HepG2 (cell line): ENCODE measurements at regions of chr19 and their contacts with region 1.

Region 1: DNA sequence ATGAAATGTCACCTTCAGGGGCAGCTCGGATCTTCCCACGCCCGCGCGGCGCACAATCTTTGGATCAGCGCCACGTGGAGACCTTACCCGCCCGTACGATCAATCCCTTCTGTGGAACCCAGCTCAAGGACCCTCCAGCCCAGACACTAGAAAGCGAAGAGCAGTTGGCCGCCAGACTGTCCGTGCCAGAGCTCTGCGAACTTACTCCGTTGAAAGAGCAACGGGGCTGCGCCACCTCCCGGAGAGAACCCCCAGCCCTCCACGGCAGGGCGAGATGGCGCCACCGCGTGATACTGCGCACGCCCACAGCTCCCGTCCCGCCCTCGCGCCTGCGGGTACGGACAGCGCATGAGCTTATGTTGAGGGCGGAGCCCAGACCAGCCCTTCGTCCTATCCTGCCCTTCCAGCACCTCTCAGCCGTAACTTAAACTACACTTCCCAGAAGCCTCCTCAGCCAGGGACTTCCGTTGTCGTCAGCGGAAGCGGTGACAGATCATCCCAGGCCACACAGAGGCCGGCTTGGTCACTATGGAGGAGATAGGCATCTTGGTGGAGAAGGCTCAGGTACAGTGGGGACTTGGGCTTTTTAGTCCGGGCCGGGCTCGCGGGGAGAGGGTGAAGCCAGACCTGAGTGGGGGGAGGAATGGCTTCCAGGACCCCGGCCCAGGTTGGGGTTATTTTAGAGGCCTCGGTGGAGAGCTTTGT is at the start of gene PSMC4:
- DNase-seq: peak; percentile 98
- ATAC-seq: peak; percentile 99
- H3K4me3 ChIP-seq: peak within 1 kb of the TSS; percentile 88 to 93 (median 93)
- H3K27ac ChIP-seq: peak within 1 kb of the TSS; percentile 76
- H3K4me1 ChIP-seq: peaks cover 34% of the 10 kb centered on the region
- H3K27me3 ChIP-seq: no peaks in the 10 kb centered on the region; a peak in 1 of 5 replicates
- CTCF ChIP-seq: peak; percentile 100
- EP300 ChIP-seq: no peak; a peak in 1 of 4 replicates
- POLR2A ChIP-seq: peak; percentile 71 to 79
- RAD21 ChIP-seq: peak; percentile 98
- total RNA-seq, gene PSMC4: 160 and 194 TPM in 2 replicates

Region 2: DNA sequence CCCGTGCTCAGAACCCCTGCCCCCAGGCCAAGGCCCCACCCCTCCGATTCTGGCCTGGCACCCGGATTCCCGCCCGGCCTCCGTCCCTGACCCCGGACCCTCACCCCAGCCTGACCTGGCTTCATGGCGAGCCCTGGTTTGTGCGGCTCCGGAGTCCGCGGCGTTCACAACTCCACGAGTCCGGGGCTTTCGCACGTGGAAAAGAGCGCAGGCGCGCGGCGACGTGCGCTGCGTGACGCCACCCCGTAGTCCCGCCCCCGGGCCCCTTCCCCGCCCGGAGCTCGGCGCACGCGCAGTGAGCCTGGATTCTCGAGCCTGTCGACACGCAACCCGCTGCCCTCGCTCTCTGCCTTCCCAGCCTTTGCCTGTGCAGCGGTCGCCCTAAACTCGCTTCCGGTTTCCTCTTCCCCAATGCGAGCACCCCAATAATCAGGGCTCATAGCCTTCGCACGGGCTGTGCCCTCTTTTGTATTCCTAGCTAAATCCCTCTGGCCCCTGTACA is 124.6 kb before region 1 on chr19 and contains the start of gene FBL:
- CTCF ChIA-PET with region 1: no interaction called
- POLR2A ChIA-PET with region 1: interaction called, 16 read pairs
- in situ Hi-C with region 1: no loop called
- intact Hi-C with region 1: no loop called
- DNase-seq: peak; percentile 84
- ATAC-seq: peak; percentile 88
- H3K4me3 ChIP-seq: peak within 1 kb of the TSS; percentile 69 to 86 (median 84)
- H3K27ac ChIP-seq: peak within 1 kb of the TSS; percentile 74
- H3K4me1 ChIP-seq: peaks cover 68% of the 10 kb centered on the region
- H3K27me3 ChIP-seq: no peaks in the 10 kb centered on the region; a peak in 1 of 5 replicates
- CTCF ChIP-seq: no peak
- EP300 ChIP-seq: no peak
- POLR2A ChIP-seq: peak; percentile 48 to 96
- RAD21 ChIP-seq: no peak
- total RNA-seq, gene FBL: 153 and 235 TPM in 2 replicates

Region 3: GRCh38 chr19:39889872-39890545 is 80.8 kb before region 1 on chr19:
- CTCF ChIA-PET with region 1: no interaction called
- POLR2A ChIA-PET with region 1: interaction called, 6 read pairs
- in situ Hi-C with region 1: loop called (anchors 5 kb)
- intact Hi-C with region 1: no loop called
- DNase-seq: no peak
- ATAC-seq: no peak
- H3K4me3 ChIP-seq: no peak overlapping the region
- H3K27ac ChIP-seq: peak overlapping the region; percentile 4
- H3K4me1 ChIP-seq: peaks cover 29% of the 10 kb centered on the region
- H3K27me3 ChIP-seq: no peaks in the 10 kb centered on the region
- CTCF ChIP-seq: no peak
- EP300 ChIP-seq: no peak
- POLR2A ChIP-seq: no peak
- RAD21 ChIP-seq: no peak

Region 4: DNA sequence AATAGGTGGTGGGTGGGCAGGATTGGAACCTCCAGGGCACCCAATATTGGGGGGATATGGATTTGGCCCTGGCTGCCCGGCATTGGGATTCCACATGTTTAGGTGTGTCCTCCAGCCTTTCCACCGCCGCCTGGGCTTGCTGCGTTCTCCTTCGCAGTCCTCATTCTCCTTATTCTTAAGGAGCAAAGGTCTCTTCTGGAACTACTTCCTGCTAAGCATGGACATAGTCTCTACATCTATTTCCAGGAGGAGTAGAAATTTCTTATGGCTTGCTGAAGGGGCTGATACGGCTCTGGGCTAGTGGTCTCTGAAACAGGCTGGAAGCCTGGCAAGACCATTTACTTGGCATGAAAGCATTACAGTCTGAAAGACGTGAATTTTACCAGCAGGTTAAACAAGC is 27.2 kb before region 1 on chr19:
- CTCF ChIA-PET with region 1: no interaction called
- POLR2A ChIA-PET with region 1: interaction called, 22 read pairs
- in situ Hi-C with region 1: no loop called
- intact Hi-C with region 1: no loop called
- DNase-seq: no peak
- ATAC-seq: no peak
- H3K4me3 ChIP-seq: no peak overlapping the region; a peak in 1 of 6 replicates
- H3K27ac ChIP-seq: peak overlapping the region; percentile 60
- H3K4me1 ChIP-seq: peaks cover 40% of the 10 kb centered on the region
- H3K27me3 ChIP-seq: no peaks in the 10 kb centered on the region
- CTCF ChIP-seq: no peak
- EP300 ChIP-seq: no peak
- POLR2A ChIP-seq: no peak
- RAD21 ChIP-seq: no peak

Region 5: GRCh38 chr19:39996811-39997594 is 26.2 kb after region 1 on chr19 and contains the start of gene ZNF546:
- CTCF ChIA-PET with region 1: no interaction called
- POLR2A ChIA-PET with region 1: interaction called, 24 read pairs
- in situ Hi-C with region 1: no loop called
- intact Hi-C with region 1: loop called (anchors 2 kb)
- DNase-seq: peak; percentile 76
- ATAC-seq: peak; percentile 97
- H3K4me3 ChIP-seq: peak within 1 kb of the TSS; percentile 79 to 93 (median 81)
- H3K27ac ChIP-seq: peak within 1 kb of the TSS; percentile 78
- H3K4me1 ChIP-seq: peaks cover 23% of the 10 kb centered on the region
- H3K27me3 ChIP-seq: no peaks in the 10 kb centered on the region; a peak in 1 of 5 replicates
- CTCF ChIP-seq: no peak
- EP300 ChIP-seq: no peak
- POLR2A ChIP-seq: peak; percentile 58 to 89
- RAD21 ChIP-seq: 0 out of 2 replicates have a peak, but pooled peaks have one; percentile 31
- total RNA-seq, gene ZNF546: 4.1 and 6.0 TPM in 2 replicates

Region 6: DNA sequence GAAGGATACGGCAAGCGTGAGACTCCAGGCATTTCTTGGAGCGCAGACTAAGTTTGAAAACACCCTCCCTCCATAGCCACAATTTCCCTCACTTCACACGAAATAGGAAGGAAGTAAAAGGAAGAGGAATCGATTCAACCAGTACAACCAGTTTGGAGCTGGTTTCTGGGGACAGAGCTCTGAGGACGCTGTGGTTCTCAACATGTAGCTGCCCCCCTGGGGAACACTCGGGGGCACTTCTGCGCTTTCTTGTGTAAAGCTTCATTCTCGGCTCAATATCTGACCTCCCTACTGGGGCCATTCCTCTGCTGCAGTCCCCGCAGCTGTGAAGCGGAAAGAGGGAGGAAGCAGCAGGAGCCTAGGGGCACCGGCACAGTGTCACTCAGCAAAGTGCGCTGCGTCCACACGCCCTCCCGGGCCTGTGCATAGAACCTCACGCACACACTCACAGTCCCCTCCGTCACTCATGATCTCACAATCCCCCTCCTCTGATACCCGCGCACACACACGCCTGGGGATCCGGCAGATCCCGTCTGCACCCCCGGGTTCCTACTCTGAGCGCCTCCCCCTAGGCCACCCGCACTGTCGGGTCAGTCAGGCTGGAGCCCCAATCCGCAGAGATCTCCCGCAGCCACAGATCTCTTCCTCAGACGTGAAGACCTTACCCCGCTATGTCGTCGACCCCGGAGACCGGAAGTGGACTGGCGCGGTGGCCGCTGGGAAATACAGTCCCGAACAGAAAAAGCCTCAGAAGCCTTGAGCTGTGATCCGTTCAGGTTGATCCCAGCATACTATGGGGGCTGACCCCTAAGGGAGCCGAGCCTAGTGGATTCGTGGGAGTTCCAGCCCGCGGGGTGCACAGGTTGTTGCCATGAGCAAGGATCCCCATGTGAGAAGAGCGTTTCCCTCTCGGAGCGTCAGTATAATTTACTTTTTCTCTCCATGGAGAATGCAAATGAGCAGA is 119.7 kb after region 1 on chr19 and contains the start of gene ZNF780A:
- CTCF ChIA-PET with region 1: no interaction called
- POLR2A ChIA-PET with region 1: interaction called, 11 read pairs
- in situ Hi-C with region 1: no loop called
- intact Hi-C with region 1: no loop called
- DNase-seq: peak; percentile 82
- ATAC-seq: peak; percentile 95
- H3K4me3 ChIP-seq: peak within 1 kb of the TSS; percentile 70 to 90 (median 82)
- H3K27ac ChIP-seq: peak within 1 kb of the TSS; percentile 90
- H3K4me1 ChIP-seq: peaks cover 38% of the 10 kb centered on the region
- H3K27me3 ChIP-seq: no peaks in the 10 kb centered on the region; a peak in 1 of 5 replicates
- CTCF ChIP-seq: no peak
- EP300 ChIP-seq: no peak
- POLR2A ChIP-seq: peak; percentile 54 to 86; a peak in 3 of 4 replicates
- RAD21 ChIP-seq: no peak
- total RNA-seq, gene ZNF780A: 22.7 and 22.9 TPM in 2 replicates